ENCODE measurements at regions of chr4 and their contacts with region 1.

Region 1: DNA sequence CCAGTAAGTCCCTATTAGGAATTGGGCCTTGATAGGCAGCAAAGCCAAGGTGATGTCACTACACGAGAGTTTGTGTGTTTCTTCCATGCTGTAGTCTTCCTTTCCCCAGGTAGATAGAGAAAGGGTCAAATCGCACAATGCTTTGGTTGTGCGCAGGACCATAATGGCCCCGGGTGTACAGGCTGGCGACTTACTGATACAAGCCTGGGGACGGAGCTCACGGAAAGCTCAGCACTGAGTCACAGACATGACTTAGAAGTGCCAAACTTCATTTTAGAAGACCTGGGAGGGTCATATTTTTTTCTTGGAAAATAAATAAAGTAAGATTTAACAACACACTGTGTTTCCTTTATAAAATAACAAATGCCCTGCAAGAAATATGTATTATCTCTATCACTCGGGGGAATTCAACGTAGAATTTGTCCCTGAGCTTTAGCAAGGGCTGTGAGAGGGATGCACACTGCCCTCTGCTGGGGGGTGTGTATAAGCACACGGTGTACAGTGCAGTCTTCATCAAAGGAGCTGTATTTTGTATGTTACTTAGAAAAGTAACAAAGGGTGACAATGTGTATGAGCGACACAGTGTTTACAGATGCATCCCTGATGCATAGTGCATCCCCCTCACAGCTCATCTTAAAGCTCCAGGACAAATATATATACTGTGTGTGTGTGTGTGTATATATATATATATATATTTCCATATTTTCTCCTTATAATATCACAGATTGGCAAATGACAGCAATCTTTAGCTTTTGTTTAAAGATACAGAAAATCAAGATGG is 254.5 kb upstream of the VEGFC start:
- DNase-seq: peak in 7 of 9 experiments; percentile 10 to 55 (median 34)
- ATAC-seq: peak; percentile 73
- H3K4me3 ChIP-seq: no peak overlapping the region
- H3K4me3 Mint-ChIP-seq: no peak overlapping the region
- H3K27ac ChIP-seq: no peak overlapping the region
- H3K27ac Mint-ChIP-seq: no peak overlapping the region
- H3K4me1 ChIP-seq: no peaks in the 10 kb centered on the region
- H3K4me1 Mint-ChIP-seq: no peaks in the 10 kb centered on the region
- H3K27me3 ChIP-seq: no peaks in the 10 kb centered on the region
- H3K27me3 Mint-ChIP-seq: peaks cover 8% of the 10 kb centered on the region
- CTCF ChIP-seq: peak; percentile 77

Region 2: DNA sequence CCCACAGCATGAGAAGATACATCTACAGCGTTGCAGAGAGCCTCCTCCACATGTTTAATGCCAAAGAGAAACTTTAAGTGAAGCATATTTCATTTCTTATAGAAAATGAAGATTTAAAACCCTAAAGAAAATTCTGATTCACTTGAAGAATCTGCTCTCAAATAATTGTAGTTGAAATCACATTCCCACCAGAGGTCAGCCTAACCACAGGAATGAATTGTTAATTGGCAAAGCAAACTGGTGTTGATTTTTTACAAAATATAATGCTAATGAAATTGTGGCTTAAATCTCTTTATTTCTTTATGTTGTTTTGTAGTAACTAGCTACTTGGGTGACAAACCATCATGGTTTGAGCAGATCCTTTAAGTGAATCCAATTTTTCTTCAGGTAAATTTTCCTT is 1012.8 kb before region 1 on chr4:
- CTCF ChIA-PET with region 1: interaction called, 3 read pairs
- POLR2A ChIA-PET with region 1: no interaction called
- intact Hi-C with region 1: loop called in 1 of 2 experiments (anchors 5 kb)
- DNase-seq: peak in 2 of 9 experiments; percentile 29 to 48
- ATAC-seq: no peak
- H3K4me3 ChIP-seq: no peak overlapping the region
- H3K4me3 Mint-ChIP-seq: no peak overlapping the region
- H3K27ac ChIP-seq: no peak overlapping the region
- H3K27ac Mint-ChIP-seq: no peak overlapping the region
- H3K4me1 ChIP-seq: no peaks in the 10 kb centered on the region
- H3K4me1 Mint-ChIP-seq: no peaks in the 10 kb centered on the region
- H3K27me3 ChIP-seq: no peaks in the 10 kb centered on the region
- H3K27me3 Mint-ChIP-seq: peaks cover 2% of the 10 kb centered on the region
- CTCF ChIP-seq: no peak

Region 3: DNA sequence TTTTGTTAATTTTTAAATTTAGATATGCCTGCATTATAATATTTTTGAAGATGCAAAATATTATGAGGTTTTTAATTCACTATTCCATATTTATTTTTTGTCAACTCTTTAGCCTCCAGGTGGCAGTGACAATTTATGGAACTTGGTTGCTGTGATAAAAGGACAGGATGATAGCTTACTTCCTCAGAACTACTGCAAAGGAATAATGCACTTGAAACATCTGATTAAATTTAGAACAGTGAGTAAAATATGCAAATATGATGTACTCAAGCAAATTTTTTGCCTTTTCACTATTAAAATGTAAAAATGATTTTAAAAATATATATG is 896.9 kb before region 1 on chr4:
- CTCF ChIA-PET with region 1: no interaction called
- POLR2A ChIA-PET with region 1: no interaction called
- intact Hi-C with region 1: loop called in 1 of 2 experiments (anchors 5 kb)
- DNase-seq: peak in 2 of 9 experiments; percentile 4 to 19
- ATAC-seq: no peak
- H3K4me3 ChIP-seq: no peak overlapping the region
- H3K4me3 Mint-ChIP-seq: no peak overlapping the region
- H3K27ac ChIP-seq: no peak overlapping the region
- H3K27ac Mint-ChIP-seq: no peak overlapping the region
- H3K4me1 ChIP-seq: no peaks in the 10 kb centered on the region
- H3K4me1 Mint-ChIP-seq: no peaks in the 10 kb centered on the region
- H3K27me3 ChIP-seq: no peaks in the 10 kb centered on the region
- H3K27me3 Mint-ChIP-seq: no peaks in the 10 kb centered on the region
- CTCF ChIP-seq: peak; percentile 23

Region 4: GRCh38 chr4:176377780-176378179 is 669.5 kb before region 1 on chr4:
- CTCF ChIA-PET with region 1: interaction called, 4 read pairs
- POLR2A ChIA-PET with region 1: no interaction called
- intact Hi-C with region 1: loop called (anchors 5 to 10 kb)
- DNase-seq: peak in 1 of 9 experiments; percentile 2
- ATAC-seq: no peak
- H3K4me3 ChIP-seq: no peak overlapping the region
- H3K4me3 Mint-ChIP-seq: no peak overlapping the region
- H3K27ac ChIP-seq: no peak overlapping the region
- H3K27ac Mint-ChIP-seq: no peak overlapping the region
- H3K4me1 ChIP-seq: no peaks in the 10 kb centered on the region
- H3K4me1 Mint-ChIP-seq: no peaks in the 10 kb centered on the region
- H3K27me3 ChIP-seq: no peaks in the 10 kb centered on the region
- H3K27me3 Mint-ChIP-seq: peaks cover 8% of the 10 kb centered on the region
- CTCF ChIP-seq: no peak

Region 5: DNA sequence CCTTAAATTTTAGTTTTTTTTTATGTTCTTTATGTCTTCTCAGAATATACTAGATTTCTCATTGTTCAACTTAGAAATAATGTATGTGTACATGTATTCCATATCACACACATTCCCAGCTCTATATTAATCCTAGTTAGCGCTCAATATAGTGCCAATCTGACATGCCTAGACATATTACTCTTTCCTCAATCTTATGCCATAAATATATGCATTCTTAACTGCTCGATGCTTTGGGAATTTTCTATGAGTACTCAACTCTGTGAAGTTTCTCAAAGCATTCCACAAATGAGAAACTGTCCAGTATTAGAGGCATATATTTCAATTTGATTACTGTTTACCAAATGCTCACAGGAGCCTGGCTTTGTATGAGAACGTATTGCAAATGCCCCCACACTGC is 23.3 kb before region 1 on chr4:
- CTCF ChIA-PET with region 1: interaction called, 10 read pairs
- POLR2A ChIA-PET with region 1: no interaction called
- intact Hi-C with region 1: no loop called
- DNase-seq: no peak
- ATAC-seq: no peak
- H3K4me3 ChIP-seq: no peak overlapping the region
- H3K4me3 Mint-ChIP-seq: no peak overlapping the region
- H3K27ac ChIP-seq: no peak overlapping the region
- H3K27ac Mint-ChIP-seq: no peak overlapping the region
- H3K4me1 ChIP-seq: no peaks in the 10 kb centered on the region
- H3K4me1 Mint-ChIP-seq: no peaks in the 10 kb centered on the region
- H3K27me3 ChIP-seq: no peaks in the 10 kb centered on the region
- H3K27me3 Mint-ChIP-seq: no peaks in the 10 kb centered on the region
- CTCF ChIP-seq: no peak

Region 6: GRCh38 chr4:177339477-177340374 is 292.5 kb after region 1 on chr4:
- CTCF ChIA-PET with region 1: no interaction called
- POLR2A ChIA-PET with region 1: no interaction called
- intact Hi-C with region 1: loop called in 1 of 2 experiments (anchors 5 kb)
- DNase-seq: peak in 2 of 9 experiments; percentile 48 to 65
- ATAC-seq: peak; percentile 88
- H3K4me3 ChIP-seq: no peak overlapping the region
- H3K4me3 Mint-ChIP-seq: peak overlapping the region; percentile 42
- H3K27ac ChIP-seq: no peak overlapping the region
- H3K27ac Mint-ChIP-seq: no peak overlapping the region
- H3K4me1 ChIP-seq: no peaks in the 10 kb centered on the region
- H3K4me1 Mint-ChIP-seq: peaks cover 5% of the 10 kb centered on the region
- H3K27me3 ChIP-seq: no peaks in the 10 kb centered on the region
- H3K27me3 Mint-ChIP-seq: no peaks in the 10 kb centered on the region
- CTCF ChIP-seq: peak; percentile 60